Pancreas (tissue), 10 donors: ENCODE measurements at regions of chr11 and their contacts with region 1.

Region 1: GRCh38 chr11:76207642-76208401 is 1.5 kb upstream of the WNT11 start:
- DNase-seq: peak; percentile 67 to 96 (median 84)
- ATAC-seq: peak; percentile 73 to 86 (median 76)
- H3K4me3 ChIP-seq: peak overlapping the region; percentile 45 to 78 (median 64)
- H3K27ac ChIP-seq: peak overlapping the region; percentile 66 to 89 (median 80)
- H3K4me1 ChIP-seq: no peaks in the 10 kb centered on the region
- H3K27me3 ChIP-seq: no peaks in the 10 kb centered on the region
- CTCF ChIP-seq: peak; percentile 91 to 98 (median 96)

Region 2: GRCh38 chr11:75525596-75526541 is 682.0 kb before region 1 on chr11 and contains the start of gene GDPD5:
- intact Hi-C with region 1: no loop called
- DNase-seq: peak; percentile 80 to 94 (median 86)
- ATAC-seq: peak; percentile 83 to 93 (median 91)
- H3K4me3 ChIP-seq: peak within 1 kb of the TSS; percentile 85 to 91 (median 88)
- H3K27ac ChIP-seq: peak within 1 kb of the TSS in 2 of 4 donors; percentile 10 to 48
- H3K4me1 ChIP-seq: peaks cover 0 to 15% (median 4%) of the 10 kb centered on the region in 3 donors
- H3K27me3 ChIP-seq: no peaks in the 10 kb centered on the region
- CTCF ChIP-seq: peak; percentile 22 to 42 (median 32)
- total RNA-seq, gene GDPD5: 24.3 to 72.7 (median 31.8) TPM

Region 3: GRCh38 chr11:76318744-76319384 is 111.0 kb after region 1 on chr11:
- intact Hi-C with region 1: loop called in 1 of 3 experiments (anchors 10 kb)
- DNase-seq: peak; percentile 70 to 93 (median 88)
- ATAC-seq: peak; percentile 70 to 83 (median 80)
- H3K4me3 ChIP-seq: no peak overlapping the region
- H3K27ac ChIP-seq: no peak overlapping the region
- H3K4me1 ChIP-seq: no peaks in the 10 kb centered on the region
- H3K27me3 ChIP-seq: no peaks in the 10 kb centered on the region
- CTCF ChIP-seq: peak; percentile 71 to 93 (median 86)

Region 4: DNA sequence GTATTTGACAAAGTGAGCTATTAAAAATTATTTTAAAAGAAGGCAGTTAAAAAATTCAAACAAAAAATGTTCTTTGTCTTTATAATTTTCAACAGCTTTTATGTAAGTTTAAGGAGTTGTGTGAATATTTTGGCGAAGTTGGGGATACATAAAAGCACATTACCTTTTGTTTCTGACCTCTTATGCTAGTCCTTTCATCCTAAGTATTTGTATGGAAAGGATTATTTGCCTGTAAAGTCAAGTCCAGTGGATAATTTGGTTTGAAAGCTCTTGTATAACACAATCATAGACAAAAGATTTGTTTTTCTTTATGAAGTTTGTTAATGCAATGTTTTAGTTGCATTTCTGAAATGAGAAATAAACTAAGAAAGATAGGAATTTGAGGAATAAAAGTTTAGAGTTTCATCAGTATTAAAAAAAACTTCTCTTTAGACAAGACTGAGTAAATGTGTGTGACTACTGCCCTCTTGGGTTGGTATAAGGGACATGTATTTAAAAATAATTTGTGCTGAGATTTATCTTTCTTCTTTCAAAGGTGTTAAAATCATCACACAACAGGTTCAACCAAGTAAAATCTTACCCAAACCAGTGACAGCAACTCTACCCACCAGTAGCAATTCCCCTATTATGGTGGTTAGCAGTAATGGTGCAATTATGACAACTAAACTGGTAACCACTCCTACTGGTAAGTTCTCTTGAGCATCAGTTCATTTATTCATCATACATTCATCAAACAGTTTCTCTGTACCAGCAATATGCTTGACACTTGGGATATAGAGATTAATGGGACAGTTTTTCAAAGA is 305.2 kb after region 1 on chr11:
- intact Hi-C with region 1: loop called in 1 of 3 experiments (anchors 10 kb)
- DNase-seq: no peak
- ATAC-seq: peak in 3 of 4 donors; percentile 59 to 76 (median 71)
- H3K4me3 ChIP-seq: no peak overlapping the region
- H3K27ac ChIP-seq: no peak overlapping the region
- H3K4me1 ChIP-seq: peaks cover 3 to 26% (median 26%) of the 10 kb centered on the region in 3 donors
- H3K27me3 ChIP-seq: no peaks in the 10 kb centered on the region
- CTCF ChIP-seq: no peak